PC-9 (cell line): ENCODE measurements at regions of chr6 and their contacts with region 1.

Region 1: DNA sequence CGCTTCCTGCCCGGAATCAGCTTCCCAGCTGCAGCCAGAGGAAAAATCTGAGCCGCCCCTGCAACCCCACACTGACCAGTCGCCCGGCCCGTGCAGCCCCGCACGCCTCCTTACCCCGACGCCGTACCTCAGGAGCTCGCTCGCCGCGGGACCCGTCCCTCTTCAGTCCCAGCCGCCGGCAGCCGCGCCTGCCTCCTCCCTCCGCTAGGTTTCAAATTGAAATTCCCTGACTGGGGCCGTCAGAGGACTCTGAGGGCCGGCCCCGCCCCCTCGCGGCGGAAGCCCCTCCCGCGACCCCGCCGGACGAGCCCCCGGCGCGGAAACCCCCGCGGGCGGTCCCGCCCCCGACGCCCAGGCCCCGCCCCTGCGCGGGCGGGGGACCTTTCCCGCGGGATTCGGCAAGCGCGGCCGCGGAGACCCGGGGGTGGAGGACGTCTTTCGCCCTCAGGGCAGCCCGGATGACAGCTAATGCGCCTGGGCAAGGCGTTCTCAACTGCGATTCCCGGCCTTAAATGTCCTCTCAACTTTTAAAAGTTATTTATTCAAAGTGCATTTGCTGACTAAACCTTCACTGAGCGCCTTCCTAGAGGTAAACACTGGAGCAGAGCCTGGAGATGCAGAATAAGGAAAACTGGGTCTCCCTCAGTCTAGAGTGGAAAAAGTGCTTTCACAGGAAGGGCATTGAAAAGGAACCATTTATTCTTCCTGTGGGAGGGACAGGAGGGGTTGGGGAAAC is at the start of gene EPB41L2:
- DNase-seq: peak; percentile 77 to 93
- H3K4me3 ChIP-seq: peak within 1 kb of the TSS; percentile 61
- H3K27ac ChIP-seq: no peak within 1 kb of the TSS
- H3K4me1 ChIP-seq: peaks cover 11% of the 10 kb centered on the region
- H3K27me3 ChIP-seq: no peaks in the 10 kb centered on the region
- CTCF ChIP-seq: no peak; the same call in 1 of the 2 replicates
- total RNA-seq, gene EPB41L2: 59.1 and 67.4 TPM in 2 replicates

Region 2: DNA sequence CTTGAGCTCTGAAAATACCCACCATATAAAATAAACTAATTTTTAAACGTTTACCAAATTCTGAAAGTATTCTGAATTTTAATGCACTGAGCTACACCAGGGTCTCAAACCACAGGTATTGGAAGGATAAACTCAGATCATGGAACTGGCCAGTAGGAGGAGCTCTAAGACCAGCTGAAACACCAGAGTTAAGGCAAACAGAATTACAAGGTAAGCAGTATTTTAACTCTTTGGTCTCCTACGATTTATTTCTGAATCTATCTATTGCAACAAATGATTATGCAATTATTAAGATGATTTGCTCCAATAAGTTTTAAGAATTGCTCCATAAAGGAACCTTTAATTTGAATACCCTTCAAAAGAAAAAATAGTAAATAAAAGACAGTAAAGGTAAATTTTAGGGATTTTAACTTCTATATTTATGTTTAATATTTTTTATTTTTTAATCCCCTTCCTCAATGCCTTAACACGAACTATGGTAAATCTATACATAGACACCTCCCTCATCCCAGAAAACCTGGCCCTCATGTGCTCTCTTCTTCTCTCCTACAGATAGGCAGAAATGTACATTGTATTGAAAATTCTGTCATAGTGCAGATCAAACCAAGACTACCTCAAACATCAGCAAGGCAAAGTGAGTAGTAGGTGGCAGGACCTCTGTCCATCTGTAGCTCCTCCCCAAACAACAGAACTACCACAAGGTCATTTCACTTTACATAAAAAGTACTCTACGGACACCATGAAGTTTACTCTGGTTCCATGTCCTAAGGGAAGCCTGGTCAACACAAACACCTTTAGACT is 177.6 kb before region 1 on chr6:
- CTCF ChIA-PET with region 1: no interaction called
- POLR2A ChIA-PET with region 1: no interaction called
- intact Hi-C with region 1: loop called (anchors 2 kb)
- DNase-seq: peak; percentile 61 to 67
- H3K4me3 ChIP-seq: no peak overlapping the region
- H3K27ac ChIP-seq: no peak overlapping the region
- H3K4me1 ChIP-seq: no peaks in the 10 kb centered on the region
- H3K27me3 ChIP-seq: no peaks in the 10 kb centered on the region
- CTCF ChIP-seq: peak; percentile 98

Region 3: DNA sequence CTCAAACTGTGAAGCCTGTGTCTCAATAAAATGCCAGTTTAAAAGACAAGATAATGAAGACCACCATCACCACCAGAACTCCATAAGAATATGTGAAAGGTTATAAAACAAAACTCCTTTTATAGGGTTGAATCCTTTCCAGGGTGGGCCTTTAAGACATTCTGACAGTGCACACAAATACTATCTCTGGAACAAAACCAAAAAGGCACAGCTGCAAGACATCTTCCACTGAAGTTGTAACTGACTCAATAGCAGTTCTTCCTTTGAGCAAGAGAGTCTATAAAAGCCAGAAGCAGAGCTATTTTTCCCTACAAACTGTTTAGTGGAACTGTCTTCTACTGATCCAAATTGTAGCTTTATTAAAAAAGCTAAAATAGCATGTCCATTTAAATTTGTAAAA is 81.8 kb before region 1 on chr6:
- CTCF ChIA-PET with region 1: no interaction called
- POLR2A ChIA-PET with region 1: interaction called, 21 read pairs
- intact Hi-C with region 1: no loop called
- DNase-seq: no peak
- H3K4me3 ChIP-seq: no peak overlapping the region
- H3K27ac ChIP-seq: no peak overlapping the region
- H3K4me1 ChIP-seq: no peaks in the 10 kb centered on the region
- H3K27me3 ChIP-seq: no peaks in the 10 kb centered on the region
- CTCF ChIP-seq: no peak

Region 4: DNA sequence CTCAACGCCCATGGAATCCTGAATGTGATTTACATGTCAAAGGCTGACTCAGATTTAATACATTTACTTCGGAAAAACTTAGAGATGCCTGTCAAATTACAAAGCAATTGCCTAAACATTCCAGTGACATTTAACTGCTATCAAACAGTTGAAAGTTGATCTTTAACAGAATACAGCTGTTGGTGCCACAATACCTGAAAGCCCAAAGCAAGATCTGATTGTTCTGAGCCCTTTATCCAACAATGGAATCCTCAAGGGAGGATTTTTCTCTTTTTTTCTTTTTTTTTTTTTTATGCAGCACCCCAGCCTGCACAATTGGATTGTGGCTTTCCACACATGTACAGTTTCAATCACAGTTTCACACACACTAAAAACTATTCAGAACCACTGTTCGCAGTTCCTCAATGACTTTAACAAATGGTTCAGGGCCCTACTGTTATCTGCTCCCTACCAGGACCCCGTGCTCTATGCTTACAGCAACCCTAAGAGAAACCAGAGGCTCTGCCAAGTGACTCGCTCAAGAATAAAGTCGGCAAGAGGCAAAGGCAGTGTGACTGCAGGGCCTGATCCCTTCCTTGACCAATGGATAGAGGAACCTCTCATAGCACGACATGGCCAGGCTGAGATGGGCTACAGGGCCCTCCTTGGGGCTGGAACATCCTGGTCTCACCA is 33.4 kb before region 1 on chr6:
- CTCF ChIA-PET with region 1: no interaction called
- POLR2A ChIA-PET with region 1: interaction called, 15 read pairs
- intact Hi-C with region 1: no loop called
- DNase-seq: no peak
- H3K4me3 ChIP-seq: no peak overlapping the region
- H3K27ac ChIP-seq: no peak overlapping the region
- H3K4me1 ChIP-seq: no peaks in the 10 kb centered on the region
- H3K27me3 ChIP-seq: no peaks in the 10 kb centered on the region
- CTCF ChIP-seq: no peak

Region 5: GRCh38 chr6:131101911-131102680 is 38.9 kb after region 1 on chr6:
- CTCF ChIA-PET with region 1: no interaction called
- POLR2A ChIA-PET with region 1: no interaction called
- intact Hi-C with region 1: loop called (anchors 2 kb)
- DNase-seq: peak in 1 of 2 experiments; percentile 43
- H3K4me3 ChIP-seq: no peak overlapping the region
- H3K27ac ChIP-seq: no peak overlapping the region
- H3K4me1 ChIP-seq: peaks cover 18% of the 10 kb centered on the region
- H3K27me3 ChIP-seq: no peaks in the 10 kb centered on the region
- CTCF ChIP-seq: no peak

Region 6: DNA sequence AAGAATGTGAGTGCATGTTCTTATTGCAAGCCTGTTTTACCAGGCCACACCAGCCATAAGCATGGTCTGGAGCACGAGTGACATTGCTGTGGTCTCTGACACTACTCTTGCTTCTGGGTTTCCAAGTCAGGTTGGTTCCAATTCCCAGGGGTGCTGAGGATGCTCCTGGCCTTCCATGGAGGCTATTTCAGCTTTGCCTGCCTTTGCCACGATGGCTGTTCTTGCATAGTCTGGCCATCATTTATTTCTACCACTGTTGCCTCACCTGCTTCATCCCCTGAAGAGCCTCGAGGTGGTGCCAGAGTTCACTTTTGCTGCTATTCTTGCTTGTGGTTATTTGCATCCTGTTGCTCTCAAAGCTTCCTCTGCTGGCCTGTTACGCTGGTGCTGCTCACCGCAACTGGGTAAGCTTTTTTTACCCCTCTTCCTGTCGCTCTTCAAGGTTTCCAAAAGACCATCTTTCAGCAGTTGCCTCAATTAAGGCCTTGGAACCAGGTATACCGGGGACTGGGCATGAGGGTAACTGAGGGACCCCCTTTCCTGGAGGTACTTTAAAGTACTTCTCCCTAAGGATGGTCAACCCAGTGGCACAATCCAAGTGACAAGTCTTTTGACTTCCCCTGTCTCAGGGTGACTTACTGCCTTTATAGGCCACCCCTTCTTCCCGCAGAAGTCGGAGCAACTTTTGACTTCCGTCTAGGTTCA is 136.5 kb after region 1 on chr6:
- CTCF ChIA-PET with region 1: no interaction called
- POLR2A ChIA-PET with region 1: no interaction called
- intact Hi-C with region 1: no loop called
- DNase-seq: peak in 1 of 2 experiments; percentile 5
- H3K4me3 ChIP-seq: no peak overlapping the region
- H3K27ac ChIP-seq: no peak overlapping the region
- H3K4me1 ChIP-seq: no peaks in the 10 kb centered on the region
- H3K27me3 ChIP-seq: no peaks in the 10 kb centered on the region
- CTCF ChIP-seq: peak; percentile 74